GM23248 (cell line): ENCODE measurements at regions of chr21 and their contacts with region 1.

Region 1: GRCh38 chr21:34642211-34643075 is 26.4 kb upstream of the CLIC6 start:
- DNase-seq: peak; percentile 33
- H3K4me3 ChIP-seq: no peak overlapping the region
- H3K27ac ChIP-seq: no peak overlapping the region
- H3K4me1 ChIP-seq: peaks cover 15% of the 10 kb centered on the region
- H3K27me3 ChIP-seq: peaks cover 7% of the 10 kb centered on the region; the same call in 1 of the 2 replicates

Region 2: DNA sequence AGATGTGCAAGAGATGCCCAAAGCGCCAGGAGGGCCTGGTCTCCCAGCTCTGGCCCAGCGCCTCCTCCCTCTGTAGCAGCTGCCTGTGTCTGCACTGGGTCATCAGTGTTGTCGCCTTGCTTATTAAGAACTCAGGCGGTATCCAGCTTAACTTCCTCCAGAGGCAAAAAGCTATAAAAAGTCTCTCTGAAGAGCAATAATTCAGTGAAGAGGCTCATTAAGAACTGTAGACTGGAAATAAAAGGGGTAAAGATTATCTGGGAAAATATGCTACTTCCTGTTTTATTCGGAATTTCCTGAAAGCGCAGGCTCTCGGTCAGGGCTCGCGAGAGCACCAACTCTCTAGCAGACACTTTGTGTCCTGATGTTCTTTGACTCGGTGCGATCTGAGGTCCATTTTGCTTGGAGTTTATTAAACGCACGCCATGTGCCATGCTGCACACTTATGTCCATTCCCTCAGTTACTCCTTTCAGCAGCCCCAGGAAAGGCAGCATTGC is 498.7 kb before region 1 on chr21:
- in situ Hi-C with region 1: no loop called
- DNase-seq: no peak
- H3K4me3 ChIP-seq: no peak overlapping the region
- H3K27ac ChIP-seq: no peak overlapping the region
- H3K4me1 ChIP-seq: no peaks in the 10 kb centered on the region
- H3K27me3 ChIP-seq: no peaks in the 10 kb centered on the region

Region 3: GRCh38 chr21:34582506-34583150 is 59.8 kb before region 1 on chr21:
- in situ Hi-C with region 1: loop called (anchors 10 kb)
- DNase-seq: peak; percentile 85
- H3K4me3 ChIP-seq: no peak overlapping the region
- H3K27ac ChIP-seq: peak overlapping the region; percentile 3; the same call in 1 of the 2 replicates
- H3K4me1 ChIP-seq: peaks cover 29% of the 10 kb centered on the region
- H3K27me3 ChIP-seq: no peaks in the 10 kb centered on the region

Region 4: GRCh38 chr21:35026617-35027562 is 384.4 kb after region 1 on chr21:
- in situ Hi-C with region 1: no loop called
- DNase-seq: peak; percentile 18
- H3K4me3 ChIP-seq: no peak overlapping the region
- H3K27ac ChIP-seq: no peak overlapping the region
- H3K4me1 ChIP-seq: peaks cover 4% of the 10 kb centered on the region; the same call in 1 of the 2 replicates
- H3K27me3 ChIP-seq: no peaks in the 10 kb centered on the region